ENCODE measurements at regions of chr15 and their contacts with region 1.

Region 1: GRCh38 chr15:37880009-37880834 is 54.2 kb upstream of the TMCO5A start:
- ATAC-seq: peak; percentile 53 to 94 (median 86)
- H3K4me3 ChIP-seq: peak overlapping the region in 2 of 5 donors; percentile 3 to 9
- H3K27ac ChIP-seq: peak overlapping the region in 1 of 2 donors; percentile 54
- H3K4me1 ChIP-seq: peaks cover 12 to 47% of the 10 kb centered on the region in 2 donors

Region 2: GRCh38 chr15:37709669-37710068 is 170.6 kb before region 1 on chr15:
- in situ Hi-C with region 1: no loop called
- ATAC-seq: no peak
- H3K4me3 ChIP-seq: no peak overlapping the region
- H3K27ac ChIP-seq: no peak overlapping the region
- H3K4me1 ChIP-seq: no peaks in the 10 kb centered on the region

Region 3: GRCh38 chr15:37764733-37765191 is 115.5 kb before region 1 on chr15:
- in situ Hi-C with region 1: loop called in 1 of 9 experiments (anchors 10 kb)
- ATAC-seq: peak in 3 of 8 experiments; percentile 70 to 91 (median 86)
- H3K4me3 ChIP-seq: no peak overlapping the region
- H3K27ac ChIP-seq: no peak overlapping the region
- H3K4me1 ChIP-seq: no peaks in the 10 kb centered on the region

Region 4: DNA sequence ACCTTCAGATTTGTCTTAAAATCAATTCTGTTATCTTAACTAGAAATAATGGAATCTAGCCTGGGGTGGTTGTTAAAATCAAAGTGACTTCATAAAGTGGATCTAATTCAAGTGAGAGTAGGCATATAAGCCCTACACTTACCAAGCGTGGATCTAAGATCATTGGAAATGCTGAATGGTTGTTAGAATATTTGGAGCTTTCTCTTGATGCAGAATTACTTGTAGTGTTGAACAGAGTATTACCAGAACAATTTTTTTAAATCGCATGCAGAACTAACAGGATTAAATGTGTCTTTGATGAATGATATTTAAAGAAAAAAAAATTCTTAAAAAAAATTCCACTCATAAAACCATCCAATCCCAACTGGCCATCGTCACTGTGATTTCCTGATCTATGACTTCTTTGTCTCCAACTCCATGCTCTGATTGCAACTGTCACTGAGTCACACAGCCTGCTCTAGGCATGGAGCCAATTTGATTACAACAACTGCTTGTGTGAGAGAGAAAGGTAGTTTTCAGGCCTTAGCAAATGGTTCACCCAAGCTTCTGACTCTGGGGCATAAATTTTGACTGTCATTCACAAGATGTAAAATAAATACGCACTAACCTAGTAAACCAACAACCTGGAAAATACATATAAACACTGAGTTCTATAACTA is 346.5 kb after region 1 on chr15:
- in situ Hi-C with region 1: no loop called
- ATAC-seq: peak in 5 of 8 experiments; percentile 55 to 97 (median 70)
- H3K4me3 ChIP-seq: no peak overlapping the region
- H3K27ac ChIP-seq: no peak overlapping the region
- H3K4me1 ChIP-seq: peaks cover 0 to 4% of the 10 kb centered on the region in 2 donors

Region 5: DNA sequence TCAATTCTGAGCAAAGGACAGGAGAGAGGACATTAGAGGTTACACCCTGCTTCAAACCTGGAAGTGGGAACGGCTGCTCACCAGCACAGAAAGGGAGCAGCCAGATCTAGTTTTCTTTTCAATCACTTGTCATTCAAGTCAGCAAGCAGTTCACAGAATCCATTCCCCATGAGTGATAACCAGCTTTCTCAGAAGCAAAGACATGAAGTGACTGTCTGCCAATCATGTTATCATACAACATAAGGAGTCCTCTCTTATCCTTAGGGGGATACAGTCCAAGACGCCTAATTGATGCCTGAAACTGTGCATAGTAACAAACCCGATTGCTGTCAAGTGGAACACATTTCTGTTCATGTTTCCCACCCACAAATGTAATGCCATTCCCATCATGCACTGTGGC is 628.4 kb after region 1 on chr15:
- in situ Hi-C with region 1: no loop called
- ATAC-seq: no peak
- H3K4me3 ChIP-seq: no peak overlapping the region
- H3K27ac ChIP-seq: no peak overlapping the region
- H3K4me1 ChIP-seq: peaks cover 0 to 4% of the 10 kb centered on the region in 2 donors